ENCODE measurements at regions of chr2 and their contacts with region 1.

Region 1: GRCh38 chr2:31333527-31334183 is 80.9 kb downstream of the XDH start:
- DNase-seq: peak; percentile 94
- H3K4me3 Mint-ChIP-seq: no peak overlapping the region
- H3K27ac Mint-ChIP-seq: no peak overlapping the region
- H3K4me1 Mint-ChIP-seq: no peaks in the 10 kb centered on the region
- H3K27me3 Mint-ChIP-seq: peaks cover 28% of the 10 kb centered on the region

Region 2: GRCh38 chr2:30862054-30862651 is 471.5 kb before region 1 on chr2:
- intact Hi-C with region 1: loop called (anchors 2 kb)
- DNase-seq: peak; percentile 76
- H3K4me3 Mint-ChIP-seq: no peak overlapping the region
- H3K27ac Mint-ChIP-seq: no peak overlapping the region
- H3K4me1 Mint-ChIP-seq: peaks cover 6% of the 10 kb centered on the region
- H3K27me3 Mint-ChIP-seq: peaks cover 5% of the 10 kb centered on the region

Region 3: DNA sequence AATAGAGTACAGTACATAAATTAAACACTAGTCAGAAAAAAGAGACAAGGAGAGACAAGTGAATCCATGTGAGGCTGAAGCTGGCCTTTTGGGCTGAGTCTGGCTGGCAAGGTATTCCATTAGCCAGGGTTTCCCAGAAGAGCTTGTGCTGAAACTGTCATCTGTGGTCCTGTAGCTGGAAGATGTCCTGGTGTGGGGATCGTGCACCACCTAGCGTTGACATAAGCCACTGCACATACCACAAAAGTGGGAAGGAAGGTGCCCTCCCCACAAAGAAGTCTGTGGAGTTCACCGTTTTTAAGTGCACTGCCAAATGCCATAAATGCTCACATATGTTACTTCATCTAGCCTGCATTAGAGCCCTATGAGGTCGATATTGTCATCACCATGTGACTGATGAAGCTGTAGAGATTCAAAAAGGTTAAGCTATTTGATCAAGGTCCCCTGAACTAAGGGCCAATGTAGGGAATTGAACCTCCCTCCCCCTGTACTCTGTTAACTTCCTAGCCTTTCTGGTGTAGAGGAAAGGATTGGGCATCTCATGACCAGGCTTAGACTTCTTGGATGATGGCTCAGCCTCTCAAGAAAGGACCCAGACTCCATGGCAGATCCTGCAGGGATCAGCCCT is 163.5 kb before region 1 on chr2:
- intact Hi-C with region 1: loop called (anchors 1 kb)
- DNase-seq: peak; percentile 85
- H3K4me3 Mint-ChIP-seq: no peak overlapping the region
- H3K27ac Mint-ChIP-seq: no peak overlapping the region
- H3K4me1 Mint-ChIP-seq: peaks cover under 1% of the 10 kb centered on the region
- H3K27me3 Mint-ChIP-seq: peaks cover 2% of the 10 kb centered on the region

Region 4: GRCh38 chr2:31233741-31234682 is 99.6 kb before region 1 on chr2 and contains the start of gene EHD3:
- intact Hi-C with region 1: loop called (anchors 5 kb)
- DNase-seq: peak; percentile 93
- H3K4me3 Mint-ChIP-seq: peak within 1 kb of the TSS; percentile 77
- H3K27ac Mint-ChIP-seq: peak within 1 kb of the TSS; percentile 17
- H3K4me1 Mint-ChIP-seq: peaks cover 8% of the 10 kb centered on the region
- H3K27me3 Mint-ChIP-seq: peaks cover 19% of the 10 kb centered on the region
- total RNA-seq, gene EHD3: 1.3 and 1.5 TPM in 2 replicates

Region 5: GRCh38 chr2:31413862-31414550 is 80.4 kb after region 1 on chr2:
- intact Hi-C with region 1: no loop called
- DNase-seq: no peak
- H3K4me3 Mint-ChIP-seq: no peak overlapping the region
- H3K27ac Mint-ChIP-seq: no peak overlapping the region
- H3K4me1 Mint-ChIP-seq: peaks cover 9% of the 10 kb centered on the region
- H3K27me3 Mint-ChIP-seq: peaks cover 11% of the 10 kb centered on the region

Measured in activated CD4-positive, alpha-beta T cell treated with anti-CD3 and anti-CD28 coated beads, Interleukin-2, amount 10 ng/mL, durations not matched to agents 24 days and 14 days (primary cell).